RWPE1 (cell line): ENCODE measurements at regions of chr9 and their contacts with region 1.

Region 1: DNA sequence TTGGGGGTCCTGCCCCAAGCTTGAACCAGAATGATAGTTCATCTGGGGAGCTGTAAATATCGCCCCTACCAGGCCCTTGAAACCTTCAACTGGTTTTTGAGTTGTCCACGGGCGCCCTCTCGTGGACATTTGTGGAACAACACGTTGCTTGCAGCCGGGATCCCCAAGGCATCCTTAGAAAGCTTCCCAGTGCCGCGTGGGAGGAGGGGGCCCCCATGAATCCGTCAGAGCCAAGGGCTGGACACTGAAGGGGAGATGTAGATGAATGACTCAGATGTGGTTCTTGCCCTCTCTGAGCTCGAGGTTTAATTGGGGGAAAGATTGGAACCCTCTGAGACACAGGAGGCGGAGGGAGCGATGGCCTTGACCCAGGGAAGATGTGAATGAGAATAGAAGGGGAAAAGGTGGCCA is 31.8 kb upstream of the ORM1 start:
- DNase-seq: peak; percentile 81
- H3K27ac ChIP-seq: no peak overlapping the region
- CTCF ChIP-seq: peak; percentile 98

Region 2: DNA sequence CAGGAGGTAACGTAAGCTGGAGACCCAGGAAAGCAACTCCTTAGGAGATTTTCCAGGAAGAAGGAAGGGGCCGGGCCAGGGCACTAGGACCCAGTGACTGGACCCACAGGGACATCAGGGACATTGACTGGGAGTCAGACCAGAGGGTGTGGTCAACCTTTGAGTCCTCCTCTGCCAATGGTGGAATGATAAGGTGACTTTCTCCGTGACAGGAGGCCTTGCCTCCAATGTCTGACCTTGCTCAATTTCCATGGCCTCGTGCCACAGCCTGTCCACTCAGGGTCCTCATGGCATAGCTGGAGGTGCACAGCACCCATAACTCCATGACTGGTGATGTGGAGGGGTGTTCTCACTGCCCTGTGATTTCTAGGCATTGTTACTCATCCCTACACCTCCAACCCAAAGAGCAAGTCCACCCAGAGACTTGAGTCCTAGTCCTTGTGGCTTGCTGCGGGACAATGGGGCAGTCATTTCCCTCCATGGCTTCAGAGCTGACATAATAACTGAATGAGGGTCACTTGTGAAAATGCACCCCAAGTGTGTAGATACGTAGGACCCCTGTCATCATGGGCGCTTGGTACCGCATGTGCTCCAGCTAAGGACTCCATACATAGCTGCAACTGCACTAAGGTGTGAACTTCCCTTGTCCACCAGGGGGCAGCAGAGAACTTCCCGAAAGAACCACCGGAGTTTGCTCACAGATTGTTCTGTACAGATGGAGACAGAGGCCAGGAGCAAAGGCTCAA is 208.9 kb before region 1 on chr9:
- CTCF ChIA-PET with region 1: interaction called, 73 read pairs
- POLR2A ChIA-PET with region 1: no interaction called
- DNase-seq: peak; percentile 95
- H3K27ac ChIP-seq: no peak overlapping the region
- CTCF ChIP-seq: peak; percentile 98

Region 3: GRCh38 chr9:114108016-114108833 is 182.8 kb before region 1 on chr9:
- CTCF ChIA-PET with region 1: interaction called, 132 read pairs
- POLR2A ChIA-PET with region 1: no interaction called
- DNase-seq: peak; percentile 94
- H3K27ac ChIP-seq: no peak overlapping the region
- CTCF ChIP-seq: peak; percentile 99

Region 4: DNA sequence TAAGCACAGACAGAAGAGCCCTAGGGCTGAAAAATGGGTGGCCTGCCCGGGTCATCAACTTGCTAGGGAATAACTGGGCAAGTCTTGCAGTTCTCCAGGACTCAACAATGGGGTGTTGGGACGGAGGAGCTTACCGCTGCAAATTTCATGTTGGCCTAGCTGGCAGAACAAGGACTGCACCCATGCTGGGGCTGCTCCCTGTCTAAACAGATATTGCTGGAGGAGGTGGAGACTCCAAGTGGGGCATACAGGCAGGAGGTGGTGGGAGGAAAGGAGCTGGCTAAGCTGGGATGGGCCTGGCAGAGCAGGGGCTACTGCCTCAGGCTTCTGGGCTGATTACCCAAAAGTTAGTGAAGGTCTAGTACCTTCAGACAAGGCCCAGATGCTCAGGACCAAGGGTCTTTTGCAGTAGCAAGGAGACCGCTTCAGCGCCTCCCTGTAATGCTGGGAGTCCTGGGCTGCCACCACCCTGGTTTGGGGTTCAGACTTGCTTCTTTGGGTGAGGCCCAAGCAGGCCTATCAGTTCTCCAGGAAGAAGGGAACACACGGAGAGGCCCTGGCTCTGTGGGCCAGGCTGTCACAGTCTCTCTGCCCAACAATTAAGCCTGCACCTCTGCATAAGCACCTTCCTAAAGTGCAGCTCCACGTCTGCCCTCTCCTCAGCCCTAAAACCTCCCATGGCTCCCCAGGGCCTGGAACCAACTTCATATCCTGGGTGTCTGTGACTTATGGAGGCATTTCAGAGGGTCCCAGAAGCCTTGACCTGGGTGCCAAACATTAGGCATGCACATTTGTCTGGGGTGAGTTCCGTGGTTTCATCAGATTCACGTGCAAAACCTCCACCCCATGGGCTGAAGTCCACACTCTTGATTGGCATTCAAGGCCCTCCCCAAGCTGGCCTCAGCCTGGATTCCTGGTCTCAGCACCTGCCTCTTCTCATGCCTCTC is 167.8 kb before region 1 on chr9:
- CTCF ChIA-PET with region 1: interaction called, 12 read pairs
- POLR2A ChIA-PET with region 1: no interaction called
- DNase-seq: no peak
- H3K27ac ChIP-seq: no peak overlapping the region
- CTCF ChIP-seq: no peak

Region 5: GRCh38 chr9:114155263-114155972 is 135.7 kb before region 1 on chr9 and contains the start of gene COL27A1:
- CTCF ChIA-PET with region 1: interaction called, 137 read pairs
- POLR2A ChIA-PET with region 1: no interaction called
- DNase-seq: peak; percentile 96
- H3K27ac ChIP-seq: peak within 1 kb of the TSS; percentile 64
- CTCF ChIP-seq: peak; percentile 100

Region 6: GRCh38 chr9:114233491-114234185 is 57.4 kb before region 1 on chr9:
- CTCF ChIA-PET with region 1: interaction called, 18 read pairs
- POLR2A ChIA-PET with region 1: no interaction called
- DNase-seq: no peak
- H3K27ac ChIP-seq: no peak overlapping the region
- CTCF ChIP-seq: no peak

Region 7: GRCh38 chr9:114276908-114277821 is 13.9 kb before region 1 on chr9:
- CTCF ChIA-PET with region 1: interaction called, 10 read pairs
- POLR2A ChIA-PET with region 1: no interaction called
- DNase-seq: peak; percentile 99
- H3K27ac ChIP-seq: peak overlapping the region; percentile 94
- CTCF ChIP-seq: no peak

Region 8: GRCh38 chr9:114307899-114308267 is 16.8 kb after region 1 on chr9:
- CTCF ChIA-PET with region 1: no interaction called
- POLR2A ChIA-PET with region 1: no interaction called
- DNase-seq: no peak
- H3K27ac ChIP-seq: no peak overlapping the region
- CTCF ChIP-seq: no peak

Region 9: GRCh38 chr9:114434878-114435311 is 143.8 kb after region 1 on chr9:
- CTCF ChIA-PET with region 1: no interaction called
- POLR2A ChIA-PET with region 1: no interaction called
- DNase-seq: peak; percentile 91
- H3K27ac ChIP-seq: no peak overlapping the region
- CTCF ChIP-seq: peak; percentile 87